HepG2 (cell line): ENCODE measurements at regions of chr3 and their contacts with region 1.

Region 1: DNA sequence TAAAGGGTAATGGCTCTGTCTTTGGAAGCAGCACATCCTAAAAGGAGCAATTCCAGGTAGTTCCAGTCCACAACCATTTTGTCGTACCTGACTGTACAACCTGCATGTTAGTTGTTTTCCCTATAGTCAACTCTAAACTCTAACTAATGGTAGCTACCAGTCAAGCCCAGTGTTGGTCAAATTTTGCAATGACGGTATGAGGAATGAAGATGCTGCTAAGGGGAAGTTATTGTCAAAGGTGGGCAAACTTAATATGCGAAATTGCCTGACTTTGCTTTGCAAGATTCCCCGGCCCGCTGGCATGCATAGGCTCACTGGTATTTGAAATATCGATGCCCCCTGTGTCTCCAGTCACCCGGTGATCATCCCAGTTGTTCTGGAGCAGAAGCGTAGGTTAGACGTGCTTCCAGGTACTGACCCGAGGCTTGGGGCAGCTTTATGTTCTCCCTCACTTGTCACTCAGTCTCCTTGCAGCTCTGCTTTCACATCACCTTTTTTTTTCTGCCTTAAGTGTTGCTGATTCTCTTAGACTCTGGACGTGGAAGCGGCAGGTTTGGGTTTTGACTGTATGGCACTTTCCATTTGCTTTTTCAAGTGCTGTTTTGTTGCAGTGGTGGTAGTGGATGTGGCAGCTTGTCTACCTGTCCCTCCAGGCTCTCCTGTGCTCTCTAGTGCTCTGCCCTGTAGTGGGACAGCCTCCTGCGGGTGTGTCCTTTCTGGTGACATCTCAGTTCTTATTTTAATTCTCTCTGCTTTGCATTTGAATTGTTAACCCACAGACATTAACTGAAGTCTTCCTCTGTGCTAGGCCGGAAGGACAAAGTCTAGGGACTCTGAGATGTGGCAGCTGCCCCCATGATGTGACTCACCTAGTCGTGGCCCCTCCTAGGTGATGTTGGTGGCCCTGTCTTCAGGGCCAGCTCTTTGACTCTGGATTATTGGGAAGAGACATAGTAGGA is 95.8 kb upstream of the UMPS start:
- DNase-seq: peak; percentile 79
- ATAC-seq: peak; percentile 78
- H3K4me3 ChIP-seq: peak overlapping the region in 2 of 3 experiments; percentile 5 to 29; a peak in 3 of 6 replicates
- H3K27ac ChIP-seq: peak overlapping the region; percentile 76
- H3K4me1 ChIP-seq: peaks cover 69% of the 10 kb centered on the region
- H3K27me3 ChIP-seq: no peaks in the 10 kb centered on the region
- CTCF ChIP-seq: no peak
- EP300 ChIP-seq: no peak; a peak in 1 of 4 replicates
- POLR2A ChIP-seq: no peak
- RAD21 ChIP-seq: no peak

Region 2: DNA sequence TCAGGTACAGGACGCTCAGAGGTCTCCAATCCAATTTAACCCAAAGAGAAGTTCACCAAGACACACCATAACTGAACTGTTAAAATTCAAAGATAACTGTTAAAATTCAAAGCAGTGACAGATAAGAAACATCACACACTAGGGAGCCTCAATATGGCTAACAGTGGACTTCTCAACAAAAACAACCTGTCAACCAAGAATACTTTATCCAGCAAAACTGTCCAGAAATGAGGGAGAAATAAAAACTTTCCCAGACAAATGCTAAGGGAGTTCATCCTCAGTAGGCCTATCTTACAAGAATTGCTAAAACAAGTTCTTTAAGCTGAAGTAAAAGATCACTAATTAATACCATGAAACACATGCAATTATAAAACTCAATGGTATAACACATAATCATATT is 714.1 kb before region 1 on chr3:
- CTCF ChIA-PET with region 1: no interaction called
- POLR2A ChIA-PET with region 1: no interaction called
- in situ Hi-C with region 1: no loop called
- intact Hi-C with region 1: no loop called
- DNase-seq: no peak
- ATAC-seq: no peak
- H3K4me3 ChIP-seq: no peak overlapping the region
- H3K27ac ChIP-seq: no peak overlapping the region
- H3K4me1 ChIP-seq: no peaks in the 10 kb centered on the region
- H3K27me3 ChIP-seq: no peaks in the 10 kb centered on the region
- CTCF ChIP-seq: no peak
- EP300 ChIP-seq: no peak
- POLR2A ChIP-seq: no peak
- RAD21 ChIP-seq: no peak

Region 3: GRCh38 chr3:124131580-124131979 is 502.9 kb before region 1 on chr3:
- CTCF ChIA-PET with region 1: no interaction called
- POLR2A ChIA-PET with region 1: no interaction called
- in situ Hi-C with region 1: no loop called
- intact Hi-C with region 1: no loop called
- DNase-seq: no peak
- ATAC-seq: no peak
- H3K4me3 ChIP-seq: no peak overlapping the region
- H3K27ac ChIP-seq: no peak overlapping the region
- H3K4me1 ChIP-seq: no peaks in the 10 kb centered on the region
- H3K27me3 ChIP-seq: no peaks in the 10 kb centered on the region; a peak in 1 of 5 replicates
- CTCF ChIP-seq: no peak
- EP300 ChIP-seq: no peak
- POLR2A ChIP-seq: no peak
- RAD21 ChIP-seq: no peak

Region 4: DNA sequence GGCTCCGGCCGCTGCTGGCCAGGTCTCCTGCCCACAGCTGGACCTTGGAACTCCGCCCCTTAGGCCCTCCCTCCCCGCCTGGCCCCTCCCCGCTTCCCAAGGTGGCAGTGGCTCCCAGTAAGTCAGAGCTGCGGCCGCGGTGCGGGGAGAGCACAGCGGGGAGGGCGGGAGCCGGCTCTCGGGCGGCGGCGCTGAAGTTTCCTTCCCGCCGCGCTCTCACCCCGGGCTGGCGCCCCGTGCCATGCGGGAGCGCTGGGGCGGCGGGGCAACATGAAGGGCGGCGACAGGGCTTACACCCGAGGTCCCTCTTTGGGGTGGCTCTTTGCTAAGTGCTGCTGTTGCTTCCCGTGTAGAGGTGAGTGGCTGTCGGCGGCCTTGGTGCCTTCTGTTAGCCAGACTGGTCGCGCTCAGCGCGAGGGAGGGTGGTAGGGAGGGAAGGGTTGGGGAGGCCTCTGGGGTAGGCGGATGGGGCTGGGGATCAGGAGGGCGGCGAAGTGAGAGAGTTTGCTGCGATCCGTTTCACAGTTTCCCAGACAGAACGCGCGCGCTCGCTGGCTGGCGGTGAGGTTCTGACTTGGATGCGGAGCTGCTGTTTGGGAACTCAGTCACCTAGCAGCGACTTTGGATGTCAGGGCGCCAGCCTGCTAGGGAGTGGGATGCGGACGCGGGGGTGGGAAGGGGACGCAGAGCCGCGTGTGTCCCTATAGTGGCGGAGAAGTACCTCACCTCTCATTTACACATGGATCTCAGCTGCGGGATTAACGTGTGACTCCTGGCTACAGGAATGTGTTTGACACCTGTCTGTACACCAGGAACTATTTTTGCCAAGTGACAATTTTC is 49.7 kb before region 1 on chr3:
- CTCF ChIA-PET with region 1: no interaction called
- POLR2A ChIA-PET with region 1: interaction called, 21 read pairs
- in situ Hi-C with region 1: no loop called
- intact Hi-C with region 1: loop called (anchors 5 kb)
- DNase-seq: peak; percentile 73
- ATAC-seq: peak; percentile 96
- H3K4me3 ChIP-seq: peak overlapping the region; percentile 73 to 89 (median 80)
- H3K27ac ChIP-seq: peak overlapping the region; percentile 63
- H3K4me1 ChIP-seq: peaks cover 66% of the 10 kb centered on the region
- H3K27me3 ChIP-seq: no peaks in the 10 kb centered on the region; a peak in 1 of 5 replicates
- CTCF ChIP-seq: peak; percentile 18; the same call in 1 of the 2 replicates
- EP300 ChIP-seq: no peak
- POLR2A ChIP-seq: peak; percentile 31 to 80; a peak in 3 of 4 replicates
- RAD21 ChIP-seq: no peak

Region 5: GRCh38 chr3:124620600-124621063 is 13.9 kb before region 1 on chr3:
- CTCF ChIA-PET with region 1: no interaction called
- POLR2A ChIA-PET with region 1: interaction called, 114 read pairs
- in situ Hi-C with region 1: no loop called
- intact Hi-C with region 1: loop called (anchors 2 kb)
- DNase-seq: peak; percentile 96
- ATAC-seq: peak; percentile 97
- H3K4me3 ChIP-seq: peak overlapping the region; percentile 28 to 48 (median 31); a peak in 4 of 6 replicates
- H3K27ac ChIP-seq: peak overlapping the region; percentile 95
- H3K4me1 ChIP-seq: peaks cover 83% of the 10 kb centered on the region
- H3K27me3 ChIP-seq: no peaks in the 10 kb centered on the region
- CTCF ChIP-seq: no peak
- EP300 ChIP-seq: peak; percentile 32 to 97; a peak in 3 of 4 replicates
- POLR2A ChIP-seq: peak in 1 of 2 experiments; percentile 59; a peak in 2 of 4 replicates
- RAD21 ChIP-seq: 0 out of 2 replicates have a peak, but pooled peaks have one; percentile 23

Region 6: DNA sequence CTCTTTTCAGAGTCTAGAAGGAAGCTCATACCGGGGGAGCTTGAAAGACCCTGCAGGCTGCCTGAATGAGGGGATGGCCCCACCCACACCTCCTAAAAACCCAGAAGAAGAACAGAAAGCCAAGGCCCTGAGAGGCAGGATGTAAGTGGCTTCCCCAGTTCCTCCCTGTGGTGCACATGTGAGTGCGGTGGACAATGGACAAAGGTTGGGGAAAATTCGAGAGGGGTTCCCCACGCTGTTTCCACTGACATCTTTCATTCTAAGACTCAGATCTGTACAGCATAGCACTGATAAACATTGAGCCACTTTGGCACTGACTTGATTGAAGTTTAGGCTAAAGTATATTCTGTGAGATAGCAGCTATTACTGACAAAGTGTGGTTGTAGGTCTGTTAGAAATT is 16.3 kb after region 1 on chr3:
- CTCF ChIA-PET with region 1: no interaction called
- POLR2A ChIA-PET with region 1: interaction called, 78 read pairs
- in situ Hi-C with region 1: no loop called
- intact Hi-C with region 1: no loop called
- DNase-seq: no peak
- ATAC-seq: no peak
- H3K4me3 ChIP-seq: no peak overlapping the region
- H3K27ac ChIP-seq: no peak overlapping the region
- H3K4me1 ChIP-seq: peaks cover 36% of the 10 kb centered on the region
- H3K27me3 ChIP-seq: no peaks in the 10 kb centered on the region
- CTCF ChIP-seq: no peak
- EP300 ChIP-seq: no peak
- POLR2A ChIP-seq: no peak
- RAD21 ChIP-seq: no peak

Region 7: GRCh38 chr3:124700880-124701684 is 66.6 kb after region 1 on chr3:
- CTCF ChIA-PET with region 1: no interaction called
- POLR2A ChIA-PET with region 1: interaction called, 29 read pairs
- in situ Hi-C with region 1: no loop called
- intact Hi-C with region 1: no loop called
- DNase-seq: peak; percentile 99
- ATAC-seq: peak; percentile 91
- H3K4me3 ChIP-seq: peak overlapping the region; percentile 48 to 76 (median 64)
- H3K27ac ChIP-seq: peak overlapping the region; percentile 98
- H3K4me1 ChIP-seq: peaks cover 67% of the 10 kb centered on the region
- H3K27me3 ChIP-seq: no peaks in the 10 kb centered on the region; a peak in 1 of 5 replicates
- CTCF ChIP-seq: no peak; the same call in 1 of the 2 replicates
- EP300 ChIP-seq: peak; percentile 80 to 85
- POLR2A ChIP-seq: peak; percentile 90 to 91
- RAD21 ChIP-seq: peak; percentile 36; the same call in 1 of the 2 replicates

Region 8: GRCh38 chr3:124730129-124730940 is 95.8 kb after region 1 on chr3 and contains the start of gene UMPS:
- CTCF ChIA-PET with region 1: no interaction called
- POLR2A ChIA-PET with region 1: interaction called, 20 read pairs
- in situ Hi-C with region 1: no loop called
- intact Hi-C with region 1: no loop called
- DNase-seq: peak; percentile 83
- ATAC-seq: peak; percentile 96
- H3K4me3 ChIP-seq: peak within 1 kb of the TSS; percentile 75 to 92 (median 88)
- H3K27ac ChIP-seq: peak within 1 kb of the TSS; percentile 98
- H3K4me1 ChIP-seq: peaks cover 43% of the 10 kb centered on the region
- H3K27me3 ChIP-seq: no peaks in the 10 kb centered on the region; a peak in 1 of 5 replicates
- CTCF ChIP-seq: peak; percentile 8; the same call in 1 of the 2 replicates
- EP300 ChIP-seq: peak; percentile 30 to 46; a peak in 2 of 4 replicates
- POLR2A ChIP-seq: peak; percentile 92
- RAD21 ChIP-seq: peak; percentile 50; the same call in 1 of the 2 replicates
- total RNA-seq, gene UMPS: 74.2 and 117 TPM in 2 replicates